OCI-LY7 (cell line): ENCODE measurements at regions of chr16 and their contacts with region 1.

Region 1: DNA sequence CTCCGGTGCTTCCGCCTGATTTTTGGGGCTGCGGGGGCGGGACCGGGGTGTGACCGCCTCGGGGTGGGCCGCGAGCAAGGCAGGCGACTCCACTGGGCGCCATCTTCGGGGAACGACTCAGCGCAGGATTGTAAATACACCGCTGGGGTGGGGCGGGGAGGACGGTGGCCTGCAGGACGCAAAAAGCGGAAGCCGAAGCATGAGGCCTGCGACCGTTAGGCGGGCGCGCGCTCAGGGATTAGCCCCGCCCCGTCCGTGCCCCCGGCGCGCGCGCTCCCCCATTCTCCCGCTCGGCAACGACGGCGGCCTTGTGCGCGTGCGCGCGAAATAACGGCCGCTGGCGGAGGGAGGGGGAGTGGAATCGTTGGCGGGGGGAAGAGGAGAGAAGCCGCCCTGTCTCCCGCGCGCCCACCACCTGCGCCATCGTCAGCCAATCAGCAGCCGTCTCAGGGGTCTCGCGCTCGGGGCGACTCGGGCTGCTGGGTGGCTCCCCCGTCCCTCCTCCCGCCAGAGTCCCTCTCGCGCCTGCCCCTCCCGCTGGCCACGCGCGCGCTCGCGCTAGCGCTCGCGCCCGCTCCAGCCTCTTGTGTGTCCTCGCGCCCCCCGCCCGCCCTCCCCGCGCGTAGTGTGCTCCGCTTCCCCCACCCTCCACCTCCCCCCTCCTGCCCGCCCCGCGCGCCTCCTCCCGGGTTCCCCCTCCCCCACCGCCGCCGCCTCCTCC is 791 bp upstream of the MAZ start:
- DNase-seq: peak; percentile 98
- H3K4me3 ChIP-seq: peak overlapping the region; percentile 71
- H3K27ac ChIP-seq: peak overlapping the region; percentile 88
- H3K4me1 ChIP-seq: peaks cover 55% of the 10 kb centered on the region
- CTCF ChIP-seq: no peak

Region 2: DNA sequence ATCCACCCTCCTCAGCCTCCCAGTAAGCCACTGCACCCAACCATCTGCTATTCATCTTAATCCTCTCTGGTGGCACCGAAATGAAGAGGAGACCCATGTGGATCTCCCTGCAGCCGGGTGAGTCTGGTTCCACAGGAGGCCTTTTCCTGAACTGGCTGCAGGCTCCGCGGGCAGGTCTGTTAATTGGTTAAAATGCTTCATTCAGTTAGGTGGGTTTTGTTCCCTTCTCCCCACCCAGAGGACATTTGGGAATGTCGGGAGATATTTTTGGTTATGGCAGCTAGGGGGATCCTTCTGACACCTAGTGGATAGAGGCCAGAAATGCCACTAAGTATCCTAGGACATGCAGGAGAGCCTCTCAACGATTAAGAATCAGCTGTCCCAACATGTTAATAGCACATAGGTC is 76.4 kb before region 1 on chr16:
- CTCF ChIA-PET with region 1: no interaction called
- POLR2A ChIA-PET with region 1: interaction called, 3 read pairs
- intact Hi-C with region 1: loop called (anchors 2 kb)
- DNase-seq: peak; percentile 45
- H3K4me3 ChIP-seq: no peak overlapping the region
- H3K27ac ChIP-seq: no peak overlapping the region
- H3K4me1 ChIP-seq: peaks cover 29% of the 10 kb centered on the region
- CTCF ChIP-seq: peak; percentile 77

Region 3: GRCh38 chr16:29790183-29790952 is 15.2 kb before region 1 on chr16 and contains the start of gene KIF22:
- CTCF ChIA-PET with region 1: interaction called, 3 read pairs
- POLR2A ChIA-PET with region 1: interaction called, 19 read pairs
- intact Hi-C with region 1: loop called (anchors 1 kb)
- DNase-seq: peak; percentile 99
- H3K4me3 ChIP-seq: peak within 1 kb of the TSS; percentile 79
- H3K27ac ChIP-seq: peak within 1 kb of the TSS; percentile 72
- H3K4me1 ChIP-seq: peaks cover 32% of the 10 kb centered on the region
- CTCF ChIP-seq: peak; percentile 82
- total RNA-seq, gene KIF22: 315 and 339 TPM in 2 replicates

Region 4: DNA sequence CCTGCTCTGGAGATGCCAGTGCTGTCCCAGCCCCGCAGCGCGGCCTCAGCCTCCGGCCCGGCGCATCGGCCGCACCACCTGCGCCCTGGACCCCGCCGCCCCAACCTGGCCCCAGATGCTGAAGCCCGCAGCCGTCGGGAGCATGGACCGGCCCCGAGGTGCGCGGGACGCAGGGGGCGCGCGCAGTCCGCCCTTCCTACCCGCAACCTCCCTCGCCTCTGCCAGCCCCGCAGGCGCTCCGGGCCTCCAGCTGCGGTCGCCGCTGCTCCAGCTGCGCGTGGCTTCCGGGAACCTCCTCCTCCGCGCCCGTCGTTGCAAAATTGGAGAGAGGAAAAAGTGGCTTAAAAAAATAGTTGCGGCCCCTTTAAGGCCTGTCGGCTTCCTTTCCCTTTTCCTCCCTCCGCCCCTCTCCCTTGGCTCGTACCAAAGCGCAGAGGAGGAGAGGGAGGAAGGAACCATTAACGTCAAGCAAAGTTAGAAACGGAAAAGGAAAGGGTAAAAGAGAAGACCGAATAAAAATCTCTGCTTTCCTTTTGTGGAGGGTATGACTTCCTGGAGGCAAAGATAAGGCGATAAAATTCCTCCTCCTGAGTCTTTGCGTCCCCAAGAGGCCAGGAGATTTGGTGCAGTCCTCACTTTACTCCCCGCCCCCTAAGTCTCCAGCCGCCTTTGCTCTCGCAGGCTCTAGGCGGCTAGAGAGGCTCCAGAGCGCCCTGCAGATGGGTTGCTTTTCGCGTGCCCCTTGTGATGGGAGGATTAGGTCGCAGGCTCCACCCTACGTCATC is 57.5 kb after region 1 on chr16 and contains the start of gene CDIPT:
- CTCF ChIA-PET with region 1: no interaction called
- POLR2A ChIA-PET with region 1: no interaction called
- intact Hi-C with region 1: loop called (anchors 1 kb)
- DNase-seq: peak; percentile 99
- H3K4me3 ChIP-seq: peak within 1 kb of the TSS; percentile 91
- H3K27ac ChIP-seq: peak within 1 kb of the TSS; percentile 45
- H3K4me1 ChIP-seq: peaks cover 15% of the 10 kb centered on the region
- CTCF ChIP-seq: peak; percentile 78
- total RNA-seq, gene CDIPT: 39.6 and 52.4 TPM in 2 replicates

Region 5: DNA sequence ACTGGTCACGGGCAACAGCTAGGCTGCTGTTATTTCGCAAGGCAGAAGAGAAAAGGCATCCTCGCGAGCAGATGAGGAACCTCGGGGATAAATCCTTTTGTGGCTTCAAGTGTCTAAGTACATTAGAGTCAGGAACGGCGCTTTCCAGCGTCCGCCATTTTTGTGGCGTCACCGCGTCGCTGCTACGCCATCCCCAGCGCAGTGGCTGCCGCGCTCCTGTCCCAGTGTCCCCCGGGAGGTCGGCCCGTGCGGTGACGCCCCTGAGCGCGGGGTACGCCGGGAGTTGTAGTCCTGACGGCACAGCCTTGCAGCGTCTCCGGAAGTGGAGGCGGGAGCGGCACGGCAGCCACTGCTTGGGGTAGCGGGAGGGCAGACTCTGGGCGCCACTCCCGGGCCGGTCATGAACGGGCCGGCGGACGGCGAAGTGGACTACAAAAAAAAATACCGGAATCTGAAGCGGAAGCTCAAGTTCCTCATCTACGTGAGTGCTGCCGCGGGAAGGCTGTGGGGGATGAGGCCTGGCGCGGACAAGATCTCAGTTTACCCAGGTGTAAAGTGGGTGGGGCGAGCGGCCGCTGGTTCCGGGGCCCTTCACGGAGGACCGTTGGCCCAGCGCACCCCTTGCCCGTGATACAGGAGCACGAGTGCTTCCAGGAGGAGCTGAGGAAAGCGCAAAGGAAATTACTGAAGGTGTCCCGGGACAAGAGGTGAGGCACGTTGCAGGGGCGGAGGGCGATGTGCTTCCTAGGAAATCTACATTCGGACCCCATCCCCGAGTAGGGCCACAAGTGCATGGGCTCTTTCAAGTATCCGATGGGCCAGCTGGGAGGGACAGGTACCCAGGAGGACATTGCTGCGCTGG is 190.6 kb after region 1 on chr16 and contains the start of gene INO80E:
- CTCF ChIA-PET with region 1: no interaction called
- POLR2A ChIA-PET with region 1: interaction called, 4 read pairs
- intact Hi-C with region 1: loop called (anchors 5 kb)
- DNase-seq: peak; percentile 99
- H3K4me3 ChIP-seq: peak within 1 kb of the TSS; percentile 85
- H3K27ac ChIP-seq: peak within 1 kb of the TSS; percentile 90
- H3K4me1 ChIP-seq: peaks cover 27% of the 10 kb centered on the region
- CTCF ChIP-seq: no peak
- total RNA-seq, gene INO80E: 88.0 and 94.7 TPM in 2 replicates

Region 6: GRCh38 chr16:30355144-30355894 is 549.8 kb after region 1 on chr16 and contains the start of gene CD2BP2:
- CTCF ChIA-PET with region 1: no interaction called
- POLR2A ChIA-PET with region 1: interaction called, 10 read pairs
- intact Hi-C with region 1: no loop called
- DNase-seq: peak; percentile 98
- H3K4me3 ChIP-seq: peak within 1 kb of the TSS; percentile 98
- H3K27ac ChIP-seq: peak within 1 kb of the TSS; percentile 76
- H3K4me1 ChIP-seq: peaks cover 62% of the 10 kb centered on the region
- CTCF ChIP-seq: 0 out of 2 replicates have a peak, but pooled peaks have one; percentile 12
- total RNA-seq, gene CD2BP2: 69.2 and 94.7 TPM in 2 replicates